GM12878 (cell line): ENCODE measurements at regions of chr3 and their contacts with region 1.

Region 1: GRCh38 chr3:18127174-18127858 is 297.8 kb downstream of the SATB1 start:
- DNase-seq: peak; percentile 45
- ATAC-seq: peak; percentile 97
- H3K4me3 ChIP-seq: no peak overlapping the region
- H3K27ac ChIP-seq: peak overlapping the region; percentile 27; the same call in 1 of the 2 replicates
- H3K4me1 ChIP-seq: peaks cover 6% of the 10 kb centered on the region; the same call in 1 of the 2 replicates
- H3K27me3 ChIP-seq: no peaks in the 10 kb centered on the region
- CTCF ChIP-seq: peak in 2 of 3 experiments; percentile 24 to 46; a peak in 4 of 6 replicates
- EP300 ChIP-seq: peak in 1 of 2 experiments; percentile 73; a peak in 2 of 4 replicates
- POLR2A ChIP-seq: no peak
- RAD21 ChIP-seq: peak; percentile 72

Region 2: GRCh38 chr3:17979252-17979651 is 148.1 kb before region 1 on chr3:
- CTCF ChIA-PET with region 1: interaction called, 3 read pairs
- POLR2A ChIA-PET with region 1: no interaction called
- RAD21 ChIA-PET with region 1: interaction called, 11 read pairs
- SMC1A ChIA-PET with region 1: interaction called, 6 read pairs
- in situ Hi-C with region 1: no loop called
- intact Hi-C with region 1: no loop called
- DNase-seq: no peak
- ATAC-seq: peak; percentile 18; the same call in 1 of the 3 replicates
- H3K4me3 ChIP-seq: no peak overlapping the region
- H3K27ac ChIP-seq: no peak overlapping the region
- H3K4me1 ChIP-seq: no peaks in the 10 kb centered on the region
- H3K27me3 ChIP-seq: peaks cover 0 to 2% of the 10 kb centered on the region in 2 experiments
- CTCF ChIP-seq: no peak
- EP300 ChIP-seq: no peak
- POLR2A ChIP-seq: no peak
- RAD21 ChIP-seq: no peak

Region 3: DNA sequence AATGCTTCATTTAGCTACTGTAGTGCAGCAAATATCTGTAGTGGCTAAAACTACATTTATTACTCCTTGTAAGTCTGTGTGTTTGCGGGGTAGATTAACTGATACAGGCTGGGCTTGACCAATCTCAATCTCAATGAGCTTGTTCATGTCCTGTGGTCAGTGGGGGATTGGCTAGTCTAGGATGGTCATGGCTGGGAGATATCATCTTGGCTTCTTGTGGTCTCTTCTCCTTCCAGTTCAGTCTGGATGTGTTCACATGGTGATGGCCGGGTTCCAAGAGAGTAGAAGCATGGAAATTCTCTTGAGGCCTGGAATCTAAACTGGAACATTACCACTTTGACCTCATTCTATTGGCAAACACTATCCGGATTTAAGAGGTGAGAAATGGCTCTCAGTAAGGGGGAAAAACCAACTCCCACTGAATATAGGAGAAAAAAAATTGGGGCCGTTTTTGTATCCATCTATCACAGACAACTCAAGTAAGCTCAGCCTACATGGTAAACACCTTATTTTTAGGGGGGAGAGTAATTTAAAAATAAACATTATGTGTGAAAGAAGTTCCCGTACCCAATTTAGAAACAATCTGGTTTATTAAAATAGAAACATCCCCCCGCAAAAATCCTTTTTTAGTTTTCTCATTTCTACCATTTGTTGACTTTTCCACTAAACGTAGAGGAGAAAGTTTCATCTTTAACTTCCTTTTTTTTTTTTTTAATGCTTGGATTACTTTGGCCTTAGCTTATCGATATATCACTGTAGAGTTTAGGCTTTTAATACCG is 100.0 kb before region 1 on chr3:
- CTCF ChIA-PET with region 1: interaction called, 4 read pairs
- POLR2A ChIA-PET with region 1: no interaction called
- RAD21 ChIA-PET with region 1: interaction called, 9 read pairs
- SMC1A ChIA-PET with region 1: interaction called, 12 read pairs
- in situ Hi-C with region 1: no loop called
- intact Hi-C with region 1: no loop called
- DNase-seq: no peak
- ATAC-seq: no peak; the same call in 2 of the 3 replicates
- H3K4me3 ChIP-seq: no peak overlapping the region
- H3K27ac ChIP-seq: no peak overlapping the region
- H3K4me1 ChIP-seq: peaks cover 2% of the 10 kb centered on the region; the same call in 1 of the 2 replicates
- H3K27me3 ChIP-seq: no peaks in the 10 kb centered on the region
- CTCF ChIP-seq: no peak
- EP300 ChIP-seq: no peak
- POLR2A ChIP-seq: no peak
- RAD21 ChIP-seq: no peak

Region 4: DNA sequence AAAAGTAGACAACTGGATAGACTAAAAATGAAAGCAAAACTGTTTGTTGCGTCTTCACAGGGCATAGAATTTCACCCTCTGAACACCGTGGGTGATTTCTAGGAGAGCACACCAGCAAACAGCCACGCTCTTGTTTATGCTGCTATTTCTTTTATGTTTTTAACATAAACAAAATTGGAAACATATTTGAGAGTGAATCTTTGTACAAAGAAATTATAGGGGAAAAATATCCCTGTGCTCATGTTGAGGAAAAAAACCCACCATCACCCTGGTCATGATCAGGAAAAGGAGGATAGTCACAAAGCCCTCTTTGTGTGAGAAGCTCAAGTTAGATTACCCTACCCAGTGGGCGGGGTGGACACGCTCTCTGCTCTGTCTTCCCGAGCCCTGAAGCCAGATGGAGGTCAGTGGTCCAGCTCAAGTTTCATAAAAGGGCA is 15.5 kb before region 1 on chr3:
- CTCF ChIA-PET with region 1: interaction called, 3 read pairs
- POLR2A ChIA-PET with region 1: no interaction called
- RAD21 ChIA-PET with region 1: interaction called, 16 read pairs
- SMC1A ChIA-PET with region 1: interaction called, 36 read pairs
- in situ Hi-C with region 1: no loop called
- intact Hi-C with region 1: no loop called
- DNase-seq: peak; percentile 31
- ATAC-seq: peak; percentile 90
- H3K4me3 ChIP-seq: no peak overlapping the region
- H3K27ac ChIP-seq: no peak overlapping the region
- H3K4me1 ChIP-seq: no peaks in the 10 kb centered on the region
- H3K27me3 ChIP-seq: no peaks in the 10 kb centered on the region
- CTCF ChIP-seq: no peak
- EP300 ChIP-seq: no peak
- POLR2A ChIP-seq: no peak
- RAD21 ChIP-seq: no peak

Region 5: GRCh38 chr3:18153571-18154173 is 26.4 kb after region 1 on chr3:
- CTCF ChIA-PET with region 1: interaction called, 6 read pairs
- POLR2A ChIA-PET with region 1: no interaction called
- RAD21 ChIA-PET with region 1: interaction called, 6 read pairs
- SMC1A ChIA-PET with region 1: interaction called, 10 read pairs
- in situ Hi-C with region 1: no loop called
- intact Hi-C with region 1: no loop called
- DNase-seq: no peak
- ATAC-seq: peak; percentile 80
- H3K4me3 ChIP-seq: no peak overlapping the region
- H3K27ac ChIP-seq: no peak overlapping the region
- H3K4me1 ChIP-seq: no peaks in the 10 kb centered on the region
- H3K27me3 ChIP-seq: no peaks in the 10 kb centered on the region; a peak in 2 of 4 replicates
- CTCF ChIP-seq: no peak
- EP300 ChIP-seq: no peak
- POLR2A ChIP-seq: no peak
- RAD21 ChIP-seq: no peak

Region 6: DNA sequence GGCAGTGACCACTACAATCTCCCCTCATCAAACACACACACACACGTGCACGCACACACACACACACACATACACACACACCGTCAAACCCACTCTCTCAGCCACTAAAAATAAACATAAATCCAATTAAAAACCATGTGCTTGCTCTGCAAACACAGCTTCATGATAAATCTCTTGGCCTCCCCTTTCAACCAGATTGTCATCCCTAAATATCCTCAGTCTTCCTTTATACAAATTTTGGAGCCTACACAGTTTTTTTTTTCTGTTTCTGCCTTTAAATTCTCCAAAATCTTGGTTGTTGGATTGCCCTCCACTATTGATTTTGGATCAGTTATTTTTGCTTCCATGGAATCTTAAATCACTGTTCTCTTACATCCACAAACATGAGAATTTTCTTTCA is 52.2 kb after region 1 on chr3:
- CTCF ChIA-PET with region 1: no interaction called
- POLR2A ChIA-PET with region 1: no interaction called
- RAD21 ChIA-PET with region 1: no interaction called
- SMC1A ChIA-PET with region 1: no interaction called
- in situ Hi-C with region 1: no loop called
- intact Hi-C with region 1: no loop called
- DNase-seq: no peak
- ATAC-seq: no peak
- H3K4me3 ChIP-seq: no peak overlapping the region
- H3K27ac ChIP-seq: no peak overlapping the region
- H3K4me1 ChIP-seq: no peaks in the 10 kb centered on the region
- H3K27me3 ChIP-seq: no peaks in the 10 kb centered on the region
- CTCF ChIP-seq: no peak
- EP300 ChIP-seq: no peak
- POLR2A ChIP-seq: no peak
- RAD21 ChIP-seq: no peak

Region 7: DNA sequence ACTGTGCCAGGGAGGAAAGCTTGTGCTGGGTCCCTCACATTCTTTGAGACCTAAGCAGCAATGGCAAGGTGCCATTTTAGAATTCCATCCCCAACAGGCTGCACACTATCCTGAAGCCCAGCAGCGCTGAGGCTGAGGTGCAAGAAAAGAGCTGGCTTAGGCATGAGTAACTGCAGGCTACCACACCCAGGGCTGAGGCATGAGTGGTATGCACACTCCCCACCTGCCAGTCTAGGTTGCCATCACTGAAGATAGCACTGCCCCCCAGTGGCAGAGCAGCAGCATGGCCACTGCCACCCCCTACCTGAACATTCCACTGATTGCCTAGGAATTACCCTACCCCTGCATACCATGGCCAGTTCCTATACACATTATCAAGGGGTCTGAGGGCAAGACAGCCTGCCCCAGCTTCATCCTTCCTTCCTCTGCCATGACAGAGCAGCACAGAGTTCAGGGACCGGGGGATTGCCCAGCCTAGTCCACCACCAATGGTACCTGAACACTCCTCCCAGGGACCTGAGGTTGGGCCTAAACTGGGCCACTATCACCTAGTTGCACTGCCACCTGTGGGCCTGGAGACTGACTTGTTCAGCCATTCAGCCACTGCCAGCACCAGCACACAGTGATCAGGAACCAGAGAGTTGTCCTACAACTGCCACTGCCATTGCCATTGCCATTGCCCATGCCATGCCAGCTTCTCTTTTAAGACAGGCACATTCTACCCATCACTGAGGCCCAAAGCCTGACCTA is 168.0 kb after region 1 on chr3:
- CTCF ChIA-PET with region 1: interaction called, 5 read pairs
- POLR2A ChIA-PET with region 1: no interaction called
- RAD21 ChIA-PET with region 1: interaction called, 15 read pairs
- SMC1A ChIA-PET with region 1: interaction called, 13 read pairs
- in situ Hi-C with region 1: no loop called
- intact Hi-C with region 1: no loop called
- DNase-seq: no peak
- ATAC-seq: peak; percentile 100
- H3K4me3 ChIP-seq: no peak overlapping the region
- H3K27ac ChIP-seq: no peak overlapping the region
- H3K4me1 ChIP-seq: no peaks in the 10 kb centered on the region
- H3K27me3 ChIP-seq: no peaks in the 10 kb centered on the region
- CTCF ChIP-seq: peak; percentile 78 to 90 (median 85)
- EP300 ChIP-seq: no peak
- POLR2A ChIP-seq: no peak
- RAD21 ChIP-seq: peak; percentile 66